CD4-positive, alpha-beta T cell (primary cell): ENCODE measurements at regions of chr14 and their contacts with region 1.

Region 1: DNA sequence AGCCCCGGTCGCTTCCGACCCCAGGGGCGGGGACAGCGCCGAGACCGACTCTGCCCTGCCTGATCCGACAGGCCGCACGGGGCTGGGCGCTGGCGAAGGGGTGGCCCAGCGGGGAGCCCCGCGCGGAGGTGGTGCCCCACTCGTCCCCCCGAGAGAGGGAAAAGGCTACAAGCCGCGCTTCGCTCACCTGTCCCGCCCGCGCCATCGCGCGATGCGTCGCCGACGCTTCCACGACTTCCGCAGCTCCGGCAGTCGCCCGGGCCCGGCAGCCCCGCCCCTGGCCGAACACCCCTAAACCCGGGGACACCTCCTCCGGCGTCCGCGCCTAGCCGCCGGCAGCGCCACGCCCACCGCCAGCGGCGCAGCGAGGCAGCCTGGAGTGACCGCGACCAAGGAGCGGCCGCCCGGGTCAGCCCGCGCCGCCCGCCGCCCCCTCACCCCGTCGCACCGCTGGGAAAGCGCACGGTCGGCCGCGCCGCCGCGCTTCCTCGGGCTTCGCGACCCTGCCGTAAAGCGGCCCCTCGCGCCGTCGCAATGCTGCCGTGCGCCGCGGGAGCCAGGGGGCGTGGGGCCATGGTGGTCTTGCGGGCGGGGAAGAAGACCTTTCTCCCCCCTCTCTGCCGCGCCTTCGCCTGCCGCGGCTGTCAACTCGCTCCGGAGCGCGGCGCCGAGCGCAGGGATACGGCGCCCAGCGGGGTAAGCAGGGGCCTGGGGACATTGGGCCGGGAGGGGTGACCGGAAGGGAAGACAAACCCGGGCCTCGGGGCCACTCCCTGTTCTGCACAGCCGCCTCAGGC is at the starts of genes BAG5 and COA8:
- DNase-seq: peak; percentile 68 to 93 (median 82)
- ATAC-seq: peak; percentile 79
- H3K4me3 ChIP-seq: peak within 1 kb of the TSS; percentile 99
- H3K4me3 Mint-ChIP-seq: peak within 1 kb of the TSS; percentile 96
- H3K27ac ChIP-seq: peak within 1 kb of the TSS; percentile 72 to 85
- H3K27ac Mint-ChIP-seq: peak within 1 kb of the TSS; percentile 94
- H3K4me1 ChIP-seq: peaks cover 56% of the 10 kb centered on the region
- H3K4me1 Mint-ChIP-seq: peaks cover 62% of the 10 kb centered on the region
- H3K27me3 ChIP-seq: no peaks in the 10 kb centered on the region
- H3K27me3 Mint-ChIP-seq: no peaks in the 10 kb centered on the region
- CTCF ChIP-seq: no peak
- total RNA-seq, gene BAG5: 39.4 to 40.3 TPM
- total RNA-seq, gene COA8: 9.1 to 10.7 TPM

Region 2: GRCh38 chr14:102362545-102363181 is 1200.0 kb before region 1 on chr14 and contains the starts of genes CINP and TECPR2:
- CTCF ChIA-PET with region 1: no interaction called
- POLR2A ChIA-PET with region 1: no interaction called
- intact Hi-C with region 1: loop called in 1 of 2 experiments (anchors 10 kb)
- DNase-seq: peak; percentile 92 to 99 (median 96)
- ATAC-seq: peak; percentile 90
- H3K4me3 ChIP-seq: peak within 1 kb of the TSS; percentile 91
- H3K4me3 Mint-ChIP-seq: peak within 1 kb of the TSS; percentile 94
- H3K27ac ChIP-seq: peak within 1 kb of the TSS; percentile 74 to 89
- H3K27ac Mint-ChIP-seq: no peak within 1 kb of the TSS
- H3K4me1 ChIP-seq: peaks cover 27% of the 10 kb centered on the region
- H3K4me1 Mint-ChIP-seq: peaks cover 21% of the 10 kb centered on the region
- H3K27me3 ChIP-seq: no peaks in the 10 kb centered on the region
- H3K27me3 Mint-ChIP-seq: no peaks in the 10 kb centered on the region
- CTCF ChIP-seq: no peak
- total RNA-seq, gene CINP: 12.6 to 14.5 TPM
- total RNA-seq, gene TECPR2: 5.0 to 5.4 TPM

Region 3: GRCh38 chr14:103385152-103385993 is 177.3 kb before region 1 on chr14 and contains the start of gene MARK3:
- CTCF ChIA-PET with region 1: no interaction called
- POLR2A ChIA-PET with region 1: no interaction called
- intact Hi-C with region 1: loop called in 1 of 2 experiments (anchors 5 kb)
- DNase-seq: peak; percentile 91 to 98 (median 94)
- ATAC-seq: peak; percentile 89
- H3K4me3 ChIP-seq: peak within 1 kb of the TSS; percentile 89
- H3K4me3 Mint-ChIP-seq: peak within 1 kb of the TSS; percentile 99
- H3K27ac ChIP-seq: peak within 1 kb of the TSS; percentile 84 to 92
- H3K27ac Mint-ChIP-seq: peak within 1 kb of the TSS; percentile 96
- H3K4me1 ChIP-seq: peaks cover 27% of the 10 kb centered on the region
- H3K4me1 Mint-ChIP-seq: peaks cover 42% of the 10 kb centered on the region
- H3K27me3 ChIP-seq: no peaks in the 10 kb centered on the region
- H3K27me3 Mint-ChIP-seq: no peaks in the 10 kb centered on the region
- CTCF ChIP-seq: peak; percentile 42
- total RNA-seq, gene MARK3: 107 TPM

Region 4: GRCh38 chr14:103528587-103529382 is 33.8 kb before region 1 on chr14 and contains the start of gene TRMT61A:
- CTCF ChIA-PET with region 1: no interaction called
- POLR2A ChIA-PET with region 1: interaction called, 17 read pairs
- intact Hi-C with region 1: loop called (anchors 1 to 5 kb)
- DNase-seq: peak; percentile 63 to 92 (median 74)
- ATAC-seq: peak; percentile 91
- H3K4me3 ChIP-seq: peak within 1 kb of the TSS; percentile 93
- H3K4me3 Mint-ChIP-seq: peak within 1 kb of the TSS; percentile 96
- H3K27ac ChIP-seq: peak within 1 kb of the TSS; percentile 61 to 77
- H3K27ac Mint-ChIP-seq: peak within 1 kb of the TSS; percentile 92
- H3K4me1 ChIP-seq: peaks cover 45% of the 10 kb centered on the region
- H3K4me1 Mint-ChIP-seq: peaks cover 36% of the 10 kb centered on the region
- H3K27me3 ChIP-seq: no peaks in the 10 kb centered on the region
- H3K27me3 Mint-ChIP-seq: peaks cover 4% of the 10 kb centered on the region
- CTCF ChIP-seq: no peak
- total RNA-seq, gene TRMT61A: 9.2 to 9.8 TPM

Region 5: GRCh38 chr14:103715052-103716000 is 152.7 kb after region 1 on chr14 and contains the starts of genes XRCC3 and ZFYVE21:
- CTCF ChIA-PET with region 1: no interaction called
- POLR2A ChIA-PET with region 1: interaction called, 6 read pairs
- intact Hi-C with region 1: loop called in 1 of 2 experiments (anchors 5 kb)
- DNase-seq: peak; percentile 99 to 100 (median 99)
- ATAC-seq: peak; percentile 93
- H3K4me3 ChIP-seq: peak within 1 kb of the TSS; percentile 51
- H3K4me3 Mint-ChIP-seq: peak within 1 kb of the TSS; percentile 94
- H3K27ac ChIP-seq: no peak within 1 kb of the TSS
- H3K27ac Mint-ChIP-seq: peak within 1 kb of the TSS; percentile 84
- H3K4me1 ChIP-seq: peaks cover 39% of the 10 kb centered on the region
- H3K4me1 Mint-ChIP-seq: peaks cover 43% of the 10 kb centered on the region
- H3K27me3 ChIP-seq: no peaks in the 10 kb centered on the region
- H3K27me3 Mint-ChIP-seq: no peaks in the 10 kb centered on the region
- CTCF ChIP-seq: no peak
- total RNA-seq, gene XRCC3: 4.6 to 4.8 TPM
- total RNA-seq, gene ZFYVE21: 2.6 to 3.0 TPM